Kidney (tissue), 22 donors: ENCODE measurements at regions of chr10 and their contacts with region 1.

Region 1: DNA sequence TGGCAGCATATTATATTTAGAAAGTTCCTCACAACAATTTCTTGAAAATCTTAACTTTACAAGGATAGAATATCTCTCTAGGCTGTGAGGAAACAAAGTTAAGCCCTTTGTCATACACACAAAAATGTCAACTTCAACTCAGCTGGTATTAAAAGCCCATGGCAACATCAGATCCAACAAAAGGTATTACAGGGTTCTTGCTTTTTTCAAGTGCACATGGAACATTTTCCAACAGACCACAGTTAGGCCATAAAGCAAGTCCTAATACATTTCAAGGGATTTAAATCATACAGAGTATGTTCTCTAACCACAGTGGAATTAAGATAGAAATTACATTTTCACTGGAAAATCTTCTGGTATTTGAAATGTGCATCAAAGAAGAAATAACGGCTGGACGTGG is 71.9 kb upstream of the OIT3 start:
- DNase-seq: no peak
- H3K4me3 ChIP-seq: no peak overlapping the region
- H3K27ac ChIP-seq: no peak overlapping the region
- H3K4me1 ChIP-seq: peaks cover 0 to 4% (median 0%) of the 10 kb centered on the region in 3 donors
- H3K27me3 ChIP-seq: no peaks in the 10 kb centered on the region
- CTCF ChIP-seq: no peak

Region 2: GRCh38 chr10:72692057-72692910 is 129.3 kb before region 1 on chr10 and contains the start of gene MCU:
- intact Hi-C with region 1: loop called (anchors 10 kb)
- DNase-seq: peak; percentile 96 to 98 (median 97)
- H3K4me3 ChIP-seq: peak within 1 kb of the TSS; percentile 79 to 83 (median 82)
- H3K27ac ChIP-seq: peak within 1 kb of the TSS; percentile 75 to 90
- H3K4me1 ChIP-seq: peaks cover 0 to 13% (median 2%) of the 10 kb centered on the region in 3 donors
- H3K27me3 ChIP-seq: no peaks in the 10 kb centered on the region
- CTCF ChIP-seq: no peak
- total RNA-seq, gene MCU: 37.6 TPM

Region 3: GRCh38 chr10:73759512-73760115 is 938.0 kb after region 1 on chr10:
- intact Hi-C with region 1: no loop called
- DNase-seq: peak in 1 of 5 donors; percentile 76
- H3K4me3 ChIP-seq: no peak overlapping the region
- H3K27ac ChIP-seq: no peak overlapping the region
- H3K4me1 ChIP-seq: peaks cover 0 to 5% (median 3%) of the 10 kb centered on the region in 3 donors
- H3K27me3 ChIP-seq: no peaks in the 10 kb centered on the region
- CTCF ChIP-seq: no peak